ENCODE measurements at regions of chr7 and their contacts with region 1.

Region 1: GRCh38 chr7:44748045-44748947 is at the start of gene ZMIZ2:
- DNase-seq: peak; percentile 93
- H3K4me3 ChIP-seq: peak within 1 kb of the TSS; percentile 53 to 78 (median 78)
- H3K27ac ChIP-seq: peak within 1 kb of the TSS; percentile 95 to 98 (median 98)
- H3K4me1 ChIP-seq: peaks cover 12 to 30% of the 10 kb centered on the region in 2 donors
- H3K27me3 ChIP-seq: no peaks in the 10 kb centered on the region
- CTCF ChIP-seq: no peak
- POLR2A ChIP-seq: peak; percentile 13 to 85
- total RNA-seq, gene ZMIZ2: 43.1 to 57.7 (median 49.8) TPM

Region 2: GRCh38 chr7:44587843-44588711 is 160.2 kb before region 1 on chr7:
- intact Hi-C with region 1: loop called (anchors 5 kb)
- DNase-seq: peak; percentile 56 to 59
- H3K4me3 ChIP-seq: no peak overlapping the region
- H3K27ac ChIP-seq: peak overlapping the region in 1 of 3 donors; percentile 10
- H3K4me1 ChIP-seq: peaks cover 0 to 9% of the 10 kb centered on the region in 2 donors
- H3K27me3 ChIP-seq: no peaks in the 10 kb centered on the region
- CTCF ChIP-seq: peak in 4 of 6 experiments; percentile 58 to 78 (median 70)
- POLR2A ChIP-seq: no peak

Region 3: DNA sequence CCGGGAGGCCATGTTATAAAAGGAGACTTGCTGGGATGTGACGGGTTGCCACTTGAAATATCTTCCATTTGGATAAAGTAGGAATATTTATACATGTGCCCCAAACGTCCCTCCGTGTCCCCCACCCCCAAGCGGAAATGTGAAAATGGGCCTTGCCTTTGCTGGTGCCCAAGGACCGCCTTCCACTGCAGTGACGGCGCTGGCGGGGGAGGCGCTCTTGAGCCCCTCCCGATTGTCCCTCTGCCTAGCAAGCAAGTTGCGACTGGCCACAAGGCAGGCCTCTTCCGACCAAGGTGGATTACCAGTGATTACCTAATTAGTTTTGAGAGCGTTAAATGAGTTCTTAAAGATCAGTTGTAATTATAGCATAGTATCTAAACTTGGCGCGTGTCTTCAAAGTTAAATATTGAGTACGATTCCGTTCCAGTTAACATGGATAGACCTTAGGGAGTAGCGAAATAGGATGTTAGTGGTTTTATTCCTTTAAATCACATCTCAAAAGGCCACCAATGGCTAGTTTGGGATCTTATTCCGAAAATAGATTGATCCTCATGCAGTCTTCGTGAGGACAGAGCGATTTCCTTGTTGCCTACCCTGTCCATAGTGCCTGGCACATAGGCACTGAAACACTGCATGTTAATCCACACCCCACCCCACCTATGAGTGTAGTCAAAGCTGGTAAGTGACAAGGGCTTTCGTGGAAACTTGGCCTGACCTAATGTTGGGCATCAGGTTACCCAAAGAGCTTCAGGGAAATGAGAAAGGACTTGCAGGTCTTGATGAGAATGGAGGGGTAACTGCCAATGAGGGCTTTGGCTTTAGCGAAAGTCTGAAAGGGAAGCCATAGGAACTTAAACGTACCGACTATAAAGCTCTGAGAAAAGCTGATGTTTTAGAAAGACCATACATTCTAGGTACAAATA is 49.3 kb after region 1 on chr7:
- intact Hi-C with region 1: loop called (anchors 5 kb)
- DNase-seq: peak; percentile 92
- H3K4me3 ChIP-seq: peak overlapping the region; percentile 27 to 92 (median 27)
- H3K27ac ChIP-seq: peak overlapping the region; percentile 97 to 100 (median 100)
- H3K4me1 ChIP-seq: peaks cover 15 to 30% of the 10 kb centered on the region in 2 donors
- H3K27me3 ChIP-seq: no peaks in the 10 kb centered on the region
- CTCF ChIP-seq: peak in 4 of 6 experiments; percentile 11 to 27 (median 22)
- POLR2A ChIP-seq: peak in 1 of 2 donors; percentile 63

Region 4: DNA sequence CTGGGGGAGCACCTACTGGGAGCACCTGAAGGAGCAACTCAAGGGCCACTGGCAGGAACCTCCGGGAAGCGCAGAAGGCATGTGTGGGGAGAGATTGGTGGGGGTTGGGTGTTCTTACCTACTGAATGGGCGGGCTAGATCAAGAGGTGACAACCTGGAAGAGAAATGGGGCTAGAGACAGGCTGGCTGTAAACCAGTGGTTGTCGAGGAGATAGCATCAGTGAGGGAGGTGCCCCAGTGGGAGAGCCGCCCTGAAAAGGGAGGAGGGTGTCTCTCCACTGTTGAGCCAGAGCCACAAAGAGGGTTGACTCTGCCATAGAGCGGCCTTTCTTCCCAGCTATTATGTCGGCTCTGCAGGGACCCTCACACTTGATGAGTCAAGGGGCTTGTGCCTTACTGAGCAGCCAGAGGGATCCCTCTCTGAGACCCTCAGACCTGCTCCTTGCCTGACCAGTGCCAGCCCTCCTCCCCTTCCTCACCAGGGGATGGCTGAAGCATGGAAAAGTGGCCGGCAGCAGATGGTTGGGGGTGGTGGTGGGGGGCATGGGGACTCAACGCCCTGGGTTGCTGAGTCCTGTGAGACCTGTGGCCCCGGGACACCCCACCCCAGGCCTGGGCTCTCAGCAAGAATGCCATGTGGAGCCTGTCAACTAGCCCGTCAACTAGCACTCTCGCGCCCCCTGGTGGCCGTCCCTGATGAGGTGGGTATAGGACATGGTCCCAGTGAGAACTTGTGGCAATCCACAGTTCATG is 173.5 kb after region 1 on chr7:
- intact Hi-C with region 1: no loop called
- DNase-seq: peak; percentile 89 to 93
- H3K4me3 ChIP-seq: no peak overlapping the region
- H3K27ac ChIP-seq: no peak overlapping the region
- H3K4me1 ChIP-seq: peaks cover 0 to 12% of the 10 kb centered on the region in 2 donors
- H3K27me3 ChIP-seq: no peaks in the 10 kb centered on the region
- CTCF ChIP-seq: peak; percentile 60 to 85 (median 74)
- POLR2A ChIP-seq: no peak

Region 5: DNA sequence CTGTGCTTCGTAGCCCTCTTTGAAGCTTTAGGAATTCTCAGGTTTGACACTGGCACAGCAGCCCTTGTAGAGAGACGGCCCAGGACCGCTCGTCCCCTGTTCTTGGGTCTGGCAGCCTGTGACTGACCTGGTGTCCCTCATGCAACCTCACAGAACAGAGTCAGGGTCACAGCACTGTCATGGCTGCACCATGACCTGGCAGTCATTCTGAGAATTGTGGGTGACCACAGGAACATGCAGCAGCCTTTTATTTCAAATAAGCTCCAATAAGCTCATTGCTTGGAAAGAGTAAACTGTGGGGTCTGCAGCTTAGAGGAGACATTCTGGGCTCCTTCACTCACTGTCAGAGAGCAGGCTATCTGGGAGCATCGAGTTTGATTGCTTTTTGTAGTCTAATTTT is 188.0 kb after region 1 on chr7:
- intact Hi-C with region 1: no loop called
- DNase-seq: no peak
- H3K4me3 ChIP-seq: no peak overlapping the region
- H3K27ac ChIP-seq: no peak overlapping the region
- H3K4me1 ChIP-seq: peaks cover 8 to 11% of the 10 kb centered on the region in 2 donors
- H3K27me3 ChIP-seq: no peaks in the 10 kb centered on the region
- CTCF ChIP-seq: no peak
- POLR2A ChIP-seq: no peak

Measured in thyroid gland (tissue), 4 donors.